ENCODE measurements at regions of chr19 and their contacts with region 1.

Region 1: GRCh38 chr19:40598121-40598917 is 2.9 kb upstream of the LTBP4 start:
- DNase-seq: peak; percentile 87
- H3K4me3 ChIP-seq: peak overlapping the region; percentile 1 to 22 (median 5)
- H3K27ac ChIP-seq: no peak overlapping the region
- H3K4me1 ChIP-seq: peaks cover 42% of the 10 kb centered on the region
- H3K27me3 ChIP-seq: peaks cover 4 to 6% of the 10 kb centered on the region in 2 experiments
- CTCF ChIP-seq: peak; percentile 95 to 98
- POLR2A ChIP-seq: peak; percentile 39

Region 2: GRCh38 chr19:40231544-40232424 is 366.5 kb before region 1 on chr19:
- CTCF ChIA-PET with region 1: no interaction called
- POLR2A ChIA-PET with region 1: no interaction called
- dilution Hi-C with region 1: no loop called
- intact Hi-C with region 1: no loop called
- DNase-seq: no peak
- H3K4me3 ChIP-seq: no peak overlapping the region
- H3K27ac ChIP-seq: no peak overlapping the region
- H3K4me1 ChIP-seq: peaks cover 28% of the 10 kb centered on the region
- H3K27me3 ChIP-seq: peaks cover 7 to 13% of the 10 kb centered on the region in 2 experiments
- CTCF ChIP-seq: no peak
- POLR2A ChIP-seq: no peak

Region 3: DNA sequence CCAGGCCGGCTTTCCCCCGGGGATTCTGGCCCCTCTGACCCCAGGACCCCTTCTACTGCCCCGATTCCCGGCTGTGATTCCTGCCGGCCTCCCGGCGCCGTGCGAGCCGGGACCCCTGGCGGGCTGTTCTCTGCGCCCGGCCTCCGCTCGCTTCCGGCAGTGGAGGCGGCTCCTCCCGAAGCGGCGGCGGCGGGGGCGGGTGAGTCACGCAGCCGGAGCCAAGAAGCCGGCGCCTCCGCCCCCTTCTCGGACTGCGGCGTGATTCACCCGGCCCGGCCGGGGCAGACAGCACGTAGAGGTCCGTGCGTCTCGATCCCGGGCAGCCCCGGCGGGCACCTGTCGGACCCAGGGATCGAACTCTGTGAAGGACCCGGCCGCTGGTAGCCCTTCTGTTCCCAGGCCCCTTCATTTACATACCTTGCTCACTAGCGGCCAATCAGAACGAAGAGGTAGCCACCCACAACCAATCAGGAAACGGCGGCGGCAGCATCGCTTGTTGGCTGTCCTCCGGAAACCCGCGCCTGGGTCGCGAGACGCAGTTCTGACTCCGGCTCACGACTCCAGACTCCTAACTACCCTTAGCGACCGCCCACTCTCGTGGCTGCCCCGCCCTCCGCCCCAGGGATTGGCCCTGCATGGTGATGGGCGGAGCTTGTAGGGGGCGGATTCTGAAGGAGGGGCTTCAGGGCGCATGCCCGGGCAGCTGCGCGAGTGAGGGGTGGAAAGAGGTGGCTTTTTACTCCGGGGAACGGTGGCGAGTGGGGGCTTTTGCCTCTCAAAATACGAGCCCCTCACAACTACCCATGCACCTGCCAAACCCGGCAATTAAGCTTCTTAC is 172.7 kb before region 1 on chr19 and contains the start of gene SERTAD1:
- CTCF ChIA-PET with region 1: interaction called, 6 read pairs
- POLR2A ChIA-PET with region 1: no interaction called
- dilution Hi-C with region 1: no loop called
- intact Hi-C with region 1: loop called (anchors 2 kb)
- DNase-seq: peak; percentile 99
- H3K4me3 ChIP-seq: peak within 1 kb of the TSS; percentile 80 to 95 (median 93)
- H3K27ac ChIP-seq: peak within 1 kb of the TSS; percentile 95
- H3K4me1 ChIP-seq: peaks cover 19% of the 10 kb centered on the region
- H3K27me3 ChIP-seq: no peaks in the 10 kb centered on the region
- CTCF ChIP-seq: peak; percentile 40 to 74
- POLR2A ChIP-seq: peak; percentile 99
- total RNA-seq, gene SERTAD1: 8.8 and 10.0 TPM in 2 replicates

Region 4: DNA sequence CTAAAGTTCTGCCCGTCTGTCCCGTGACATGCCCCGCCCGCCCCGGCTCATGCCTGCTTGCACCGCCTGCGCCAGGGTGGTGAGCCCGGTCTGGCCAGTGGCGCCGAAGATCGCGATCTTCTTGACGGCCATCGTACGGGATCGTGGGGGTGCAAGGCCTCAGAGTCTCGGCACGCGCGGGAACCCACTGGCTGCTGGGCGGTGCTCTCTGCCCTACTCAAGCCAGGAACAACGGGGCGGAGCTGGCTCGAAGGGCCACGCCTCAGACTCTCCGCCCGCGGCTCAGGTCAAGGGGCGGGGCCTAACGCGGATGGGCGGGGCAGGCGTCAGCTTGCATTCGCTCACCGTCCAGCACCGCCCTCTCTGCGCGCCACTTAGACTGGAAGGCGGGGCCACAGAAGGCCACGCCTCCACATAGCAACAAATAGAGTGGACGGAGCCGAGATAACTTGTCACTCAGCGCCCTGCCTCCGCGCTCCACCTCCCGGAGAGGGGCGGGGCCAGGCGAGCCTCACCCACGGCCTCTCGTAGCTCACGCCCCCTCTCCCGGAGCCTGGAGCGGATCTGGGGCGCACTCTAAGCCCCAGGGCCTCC is 132.7 kb before region 1 on chr19 and contains the start of gene BLVRB:
- CTCF ChIA-PET with region 1: interaction called, 44 read pairs
- POLR2A ChIA-PET with region 1: no interaction called
- dilution Hi-C with region 1: no loop called
- intact Hi-C with region 1: loop called (anchors 1 kb)
- DNase-seq: peak; percentile 100
- H3K4me3 ChIP-seq: peak within 1 kb of the TSS; percentile 14 to 69 (median 49)
- H3K27ac ChIP-seq: peak within 1 kb of the TSS; percentile 47
- H3K4me1 ChIP-seq: peaks cover 14% of the 10 kb centered on the region
- H3K27me3 ChIP-seq: peaks cover 2 to 5% of the 10 kb centered on the region in 2 experiments
- CTCF ChIP-seq: no peak
- POLR2A ChIP-seq: no peak
- total RNA-seq, gene BLVRB: 30.8 and 35.8 TPM in 2 replicates

Region 5: GRCh38 chr19:40529093-40529954 is 69.0 kb before region 1 on chr19:
- CTCF ChIA-PET with region 1: interaction called, 7 read pairs
- POLR2A ChIA-PET with region 1: no interaction called
- dilution Hi-C with region 1: no loop called
- intact Hi-C with region 1: loop called (anchors 1 kb)
- DNase-seq: peak; percentile 87
- H3K4me3 ChIP-seq: peak overlapping the region in 1 of 3 experiments; percentile 27
- H3K27ac ChIP-seq: no peak overlapping the region
- H3K4me1 ChIP-seq: no peaks in the 10 kb centered on the region
- H3K27me3 ChIP-seq: peaks cover 2 to 6% of the 10 kb centered on the region in 2 experiments
- CTCF ChIP-seq: peak; percentile 93 to 98
- POLR2A ChIP-seq: no peak

Region 6: GRCh38 chr19:40549007-40549708 is 49.2 kb before region 1 on chr19:
- CTCF ChIA-PET with region 1: interaction called, 50 read pairs
- POLR2A ChIA-PET with region 1: no interaction called
- dilution Hi-C with region 1: no loop called
- intact Hi-C with region 1: loop called (anchors 1 kb)
- DNase-seq: peak; percentile 42
- H3K4me3 ChIP-seq: no peak overlapping the region
- H3K27ac ChIP-seq: no peak overlapping the region
- H3K4me1 ChIP-seq: no peaks in the 10 kb centered on the region
- H3K27me3 ChIP-seq: peaks cover 14 to 16% of the 10 kb centered on the region in 2 experiments
- CTCF ChIP-seq: peak; percentile 7 to 67
- POLR2A ChIP-seq: no peak

Region 7: DNA sequence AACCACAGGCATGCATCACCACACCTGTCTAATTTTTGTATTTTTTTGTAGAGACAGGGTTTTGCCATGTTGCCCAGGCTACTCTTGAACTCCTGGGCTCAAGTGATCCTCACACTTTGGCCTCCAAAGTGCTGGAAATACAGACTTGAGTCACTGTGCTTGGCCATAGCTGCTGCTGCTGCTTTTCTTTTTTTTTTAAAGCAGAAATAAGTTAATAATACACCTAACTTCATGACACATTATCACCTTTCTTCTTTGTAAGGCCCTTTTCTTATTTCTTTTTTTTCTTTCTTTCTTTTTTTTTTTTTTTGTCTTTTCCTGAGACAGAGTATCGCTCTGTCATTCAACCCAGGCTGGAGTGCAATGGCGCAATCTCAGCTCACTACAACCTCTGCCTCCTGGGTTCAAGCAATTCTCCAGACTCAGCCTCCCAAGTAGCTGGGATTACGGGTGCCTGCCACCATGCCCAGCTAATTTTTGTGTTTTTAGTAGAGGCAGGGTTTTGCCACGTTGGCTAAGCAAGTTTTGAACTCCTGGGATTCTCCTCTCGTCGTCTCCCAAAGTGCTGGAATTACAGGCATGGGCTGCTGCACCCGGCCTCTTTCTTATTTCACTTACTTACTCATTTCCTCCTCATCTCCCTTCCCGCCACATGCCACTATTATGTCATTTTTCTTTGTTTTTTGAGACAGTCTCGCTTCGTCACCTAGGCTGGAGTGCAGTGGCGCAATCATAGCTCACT is 12.9 kb before region 1 on chr19:
- CTCF ChIA-PET with region 1: interaction called, 8 read pairs
- POLR2A ChIA-PET with region 1: no interaction called
- dilution Hi-C with region 1: no loop called
- intact Hi-C with region 1: loop called (anchors 1 kb)
- DNase-seq: peak; percentile 64
- H3K4me3 ChIP-seq: no peak overlapping the region
- H3K27ac ChIP-seq: peak overlapping the region; percentile 85
- H3K4me1 ChIP-seq: peaks cover 20% of the 10 kb centered on the region
- H3K27me3 ChIP-seq: no peaks in the 10 kb centered on the region
- CTCF ChIP-seq: no peak
- POLR2A ChIP-seq: no peak

Region 8: GRCh38 chr19:40948580-40949299 is 350.4 kb after region 1 on chr19:
- CTCF ChIA-PET with region 1: no interaction called
- POLR2A ChIA-PET with region 1: no interaction called
- dilution Hi-C with region 1: no loop called
- intact Hi-C with region 1: no loop called
- DNase-seq: no peak
- H3K4me3 ChIP-seq: no peak overlapping the region
- H3K27ac ChIP-seq: no peak overlapping the region
- H3K4me1 ChIP-seq: no peaks in the 10 kb centered on the region
- H3K27me3 ChIP-seq: no peaks in the 10 kb centered on the region
- CTCF ChIP-seq: no peak
- POLR2A ChIP-seq: no peak